Heart right ventricle (tissue), 16 donors: ENCODE measurements at regions of chr2 and their contacts with region 1.

Region 1: DNA sequence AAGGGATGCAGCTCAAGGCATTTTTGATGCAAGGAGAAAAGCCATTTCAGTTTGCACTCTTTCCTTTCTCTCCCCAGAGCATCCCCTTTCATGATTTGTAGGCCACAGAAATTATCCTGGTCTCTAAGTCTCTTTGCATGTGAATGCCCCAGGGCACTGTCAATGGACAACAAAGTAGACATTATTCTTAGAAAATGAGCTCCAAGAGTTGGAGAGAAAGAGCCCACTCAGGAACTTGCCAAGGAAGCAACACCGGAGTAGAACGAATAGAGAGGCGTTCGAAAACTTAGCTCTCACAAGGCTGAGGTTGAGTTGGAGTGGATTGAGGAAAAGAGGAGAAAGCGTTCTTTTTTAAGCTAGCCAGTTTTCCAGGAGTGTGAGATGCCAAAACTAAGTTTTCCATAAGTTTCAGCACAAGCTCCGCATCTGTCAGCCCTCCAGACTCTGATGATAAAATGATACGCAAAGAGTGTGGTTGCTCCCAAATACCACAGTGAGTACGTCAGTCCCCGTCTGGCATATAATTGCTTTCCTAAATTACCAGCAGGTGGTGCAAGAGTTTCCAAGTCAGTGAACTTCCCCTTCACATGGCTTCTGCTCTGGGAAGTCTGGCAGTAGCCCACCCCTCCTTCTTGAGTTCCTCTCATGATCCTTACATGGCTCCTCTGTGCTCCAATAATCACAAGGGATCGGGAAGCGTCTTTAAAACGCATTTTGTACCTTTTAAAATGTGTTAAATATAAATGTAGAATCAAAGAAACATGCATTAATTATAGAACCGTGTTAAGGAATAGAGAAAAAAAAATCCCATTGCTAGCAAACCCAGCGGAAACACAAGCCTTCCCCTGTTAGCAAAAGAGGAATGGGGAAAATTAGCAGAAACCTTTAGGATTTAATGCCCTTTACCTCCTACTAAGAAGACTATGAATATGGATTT is 1060.6 kb upstream of the FANCL start:
- DNase-seq: peak in 1 of 2 donors; percentile 41
- ATAC-seq: peak in 6 of 8 donors; percentile 71 to 88 (median 78)
- H3K4me3 ChIP-seq: no peak overlapping the region
- H3K27ac ChIP-seq: no peak overlapping the region
- H3K4me1 ChIP-seq: peaks cover 0 to 4% (median 0%) of the 10 kb centered on the region in 9 donors
- H3K27me3 ChIP-seq: peaks cover 0 to 9% (median 0%) of the 10 kb centered on the region in 7 donors
- CTCF ChIP-seq: peak; percentile 24 to 74 (median 64)

Region 2: GRCh38 chr2:58620093-58620492 is 681.6 kb before region 1 on chr2:
- intact Hi-C with region 1: no loop called
- DNase-seq: no peak
- ATAC-seq: no peak
- H3K4me3 ChIP-seq: no peak overlapping the region
- H3K27ac ChIP-seq: no peak overlapping the region
- H3K4me1 ChIP-seq: no peaks in the 10 kb centered on the region
- H3K27me3 ChIP-seq: no peaks in the 10 kb centered on the region
- CTCF ChIP-seq: no peak

Region 3: DNA sequence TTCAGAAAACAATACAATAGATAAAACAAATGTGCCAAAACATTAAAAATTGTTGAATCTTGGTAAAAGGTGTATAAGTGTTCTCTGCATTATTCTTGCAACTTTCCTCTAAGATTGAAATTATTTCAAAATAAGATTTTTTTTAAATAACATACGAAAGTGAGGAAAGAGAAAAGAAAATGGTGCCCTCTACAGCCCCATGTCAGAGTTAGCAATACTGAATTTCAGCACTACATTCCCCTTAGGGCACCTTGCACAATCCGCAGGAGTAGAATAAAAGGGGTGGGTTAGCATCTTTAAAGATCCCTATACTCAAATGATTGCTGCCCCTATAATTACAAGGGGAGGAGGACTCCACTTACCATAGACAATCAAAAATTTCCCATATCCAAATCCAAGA is 818.1 kb after region 1 on chr2:
- intact Hi-C with region 1: loop called in 3 of 10 experiments (anchors 10 kb)
- DNase-seq: no peak
- ATAC-seq: no peak
- H3K4me3 ChIP-seq: no peak overlapping the region
- H3K27ac ChIP-seq: no peak overlapping the region
- H3K4me1 ChIP-seq: no peaks in the 10 kb centered on the region
- H3K27me3 ChIP-seq: no peaks in the 10 kb centered on the region
- CTCF ChIP-seq: peak in 5 of 9 donors; percentile 16 to 48 (median 40)

Region 4: DNA sequence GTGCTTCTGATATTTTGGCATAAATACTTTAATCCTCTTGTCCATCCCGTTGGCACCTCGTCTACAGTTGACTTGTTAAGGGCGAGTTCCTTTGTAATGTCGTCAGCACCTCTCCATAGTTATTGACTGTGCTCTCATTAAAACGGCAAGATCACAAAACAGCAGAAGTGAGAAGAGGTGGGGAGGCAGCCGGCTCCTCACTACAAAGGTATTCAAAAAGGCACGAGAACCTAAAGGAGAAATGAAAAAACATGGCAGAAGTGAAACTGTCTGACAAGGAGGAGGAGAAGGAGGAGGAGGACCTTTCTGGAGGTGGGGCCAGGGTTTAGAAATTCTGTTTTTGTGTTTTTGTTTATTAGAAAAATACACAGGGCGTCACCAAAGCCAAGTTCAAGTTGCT is 1016.1 kb after region 1 on chr2:
- intact Hi-C with region 1: loop called in 2 of 10 experiments (anchors 10 kb)
- DNase-seq: no peak
- ATAC-seq: peak in 7 of 8 donors; percentile 38 to 93 (median 64)
- H3K4me3 ChIP-seq: peak overlapping the region in 4 of 10 donors; percentile 2 to 25 (median 12)
- H3K27ac ChIP-seq: peak overlapping the region in 3 of 10 donors; percentile 10 to 30 (median 19)
- H3K4me1 ChIP-seq: peaks cover 0 to 19% (median 4%) of the 10 kb centered on the region in 9 donors
- H3K27me3 ChIP-seq: peaks cover 0 to 11% (median 0%) of the 10 kb centered on the region in 7 donors
- CTCF ChIP-seq: no peak

Region 5: DNA sequence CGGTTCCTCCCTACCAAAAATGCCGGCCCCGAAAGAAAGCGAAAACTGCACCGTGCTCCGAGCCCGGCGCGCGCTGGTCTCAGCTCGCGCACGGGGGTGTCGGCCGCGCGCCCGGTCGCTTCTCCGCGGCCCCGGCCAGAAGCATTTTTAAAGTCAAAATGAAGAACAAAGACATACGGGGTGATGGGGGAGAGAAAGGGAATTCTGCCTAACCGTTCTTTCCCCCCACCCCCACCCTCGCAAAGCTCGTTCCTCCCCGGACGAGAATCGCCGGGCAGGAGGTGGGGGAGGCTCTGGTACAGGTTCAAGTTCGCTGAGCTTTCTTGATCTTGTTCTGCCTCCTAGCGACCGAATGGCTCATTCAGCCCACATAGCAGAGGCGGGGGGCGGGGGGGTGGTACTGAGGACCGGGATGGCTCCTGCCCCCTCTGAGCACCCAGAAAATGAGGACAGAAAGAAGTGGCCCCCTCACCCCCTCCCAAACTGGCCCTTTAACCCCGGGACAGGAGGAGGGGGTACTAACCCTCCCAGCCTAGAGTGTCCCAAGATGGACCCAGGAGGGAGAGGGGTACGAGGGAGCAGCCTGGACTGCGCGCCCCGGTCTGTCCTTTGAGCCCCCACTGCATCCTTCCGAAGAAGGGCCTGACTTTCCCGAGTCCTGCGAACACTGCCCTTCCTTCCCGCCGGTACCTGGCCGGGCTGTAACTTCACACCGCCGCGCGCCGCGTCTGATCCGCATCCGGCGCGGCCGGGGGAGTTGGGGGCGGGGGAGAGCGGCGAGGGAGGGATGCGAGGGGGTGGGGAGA is 1248.6 kb after region 1 on chr2:
- intact Hi-C with region 1: loop called in 3 of 10 experiments (anchors 5 to 10 kb)
- DNase-seq: peak; percentile 52 to 81
- ATAC-seq: peak; percentile 59 to 84 (median 80)
- H3K4me3 ChIP-seq: peak overlapping the region; percentile 42 to 80 (median 68)
- H3K27ac ChIP-seq: peak overlapping the region in 9 of 10 donors; percentile 56 to 85 (median 77)
- H3K4me1 ChIP-seq: peaks cover 0 to 79% (median 41%) of the 10 kb centered on the region in 9 donors
- H3K27me3 ChIP-seq: peaks cover 0 to 100% (median 92%) of the 10 kb centered on the region in 7 donors
- CTCF ChIP-seq: peak in 8 of 9 donors; percentile 22 to 66 (median 57)

Region 6: GRCh38 chr2:60560734-60561644 is 1259.3 kb after region 1 on chr2:
- intact Hi-C with region 1: loop called in 4 of 10 experiments (anchors 5 to 10 kb)
- DNase-seq: no peak
- ATAC-seq: peak in 2 of 8 donors; percentile 52 to 71
- H3K4me3 ChIP-seq: no peak overlapping the region
- H3K27ac ChIP-seq: no peak overlapping the region
- H3K4me1 ChIP-seq: peaks cover 0 to 16% (median 4%) of the 10 kb centered on the region in 9 donors
- H3K27me3 ChIP-seq: peaks cover 0 to 87% (median 78%) of the 10 kb centered on the region in 7 donors
- CTCF ChIP-seq: peak in 7 of 9 donors; percentile 38 to 52 (median 47)

Region 7: DNA sequence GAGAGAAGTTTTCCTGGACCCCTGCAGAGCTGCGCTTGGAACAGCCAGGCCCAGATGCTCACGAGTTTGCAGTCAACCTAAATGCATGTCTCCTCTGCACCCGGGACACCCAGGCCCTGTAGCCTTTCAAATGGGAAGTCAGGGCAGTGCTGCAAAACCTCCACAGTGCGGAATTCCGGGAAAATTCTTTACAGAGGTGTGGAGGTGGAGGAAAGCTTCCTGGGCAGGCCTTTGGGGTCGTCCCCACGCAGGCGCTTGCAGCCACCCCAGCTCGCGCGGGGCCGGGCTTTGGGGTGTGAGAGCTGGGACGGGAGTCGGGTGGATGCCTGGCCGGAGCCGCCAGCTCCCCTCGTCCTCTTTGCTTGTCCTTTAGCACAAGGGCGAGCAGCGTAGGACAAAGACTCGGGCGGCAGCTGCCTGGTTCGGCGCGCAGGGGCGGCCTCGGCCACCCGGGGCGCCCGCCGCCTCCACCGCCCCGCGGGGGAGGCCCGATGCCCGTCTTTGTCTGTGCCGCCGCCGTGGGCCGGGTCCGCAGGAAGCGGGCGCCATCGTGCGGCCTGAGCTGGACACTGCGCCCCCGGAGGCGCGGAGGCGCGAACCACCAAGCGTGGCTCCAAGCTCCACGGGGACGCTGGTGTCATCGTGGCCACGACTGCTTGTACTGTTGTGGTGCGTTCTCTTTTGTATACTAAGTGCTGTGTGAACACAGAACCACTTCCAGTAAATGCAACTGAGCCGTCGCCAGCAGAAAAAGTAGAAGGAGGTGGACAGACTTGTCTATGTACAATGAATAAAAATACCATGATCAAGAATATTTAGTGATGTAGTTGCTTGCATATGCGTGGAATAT is 1279.9 kb after region 1 on chr2:
- intact Hi-C with region 1: loop called in 4 of 10 experiments (anchors 10 kb)
- DNase-seq: peak; percentile 23 to 72
- ATAC-seq: peak; percentile 81 to 97 (median 90)
- H3K4me3 ChIP-seq: peak overlapping the region in 9 of 10 donors; percentile 23 to 48 (median 44)
- H3K27ac ChIP-seq: no peak overlapping the region
- H3K4me1 ChIP-seq: peaks cover 0 to 9% (median 4%) of the 10 kb centered on the region in 9 donors
- H3K27me3 ChIP-seq: peaks cover 0 to 69% (median 50%) of the 10 kb centered on the region in 7 donors
- CTCF ChIP-seq: peak; percentile 63 to 96 (median 91)